PC-9 (cell line): ENCODE measurements at regions of chrX and their contacts with region 1.

Region 1: DNA sequence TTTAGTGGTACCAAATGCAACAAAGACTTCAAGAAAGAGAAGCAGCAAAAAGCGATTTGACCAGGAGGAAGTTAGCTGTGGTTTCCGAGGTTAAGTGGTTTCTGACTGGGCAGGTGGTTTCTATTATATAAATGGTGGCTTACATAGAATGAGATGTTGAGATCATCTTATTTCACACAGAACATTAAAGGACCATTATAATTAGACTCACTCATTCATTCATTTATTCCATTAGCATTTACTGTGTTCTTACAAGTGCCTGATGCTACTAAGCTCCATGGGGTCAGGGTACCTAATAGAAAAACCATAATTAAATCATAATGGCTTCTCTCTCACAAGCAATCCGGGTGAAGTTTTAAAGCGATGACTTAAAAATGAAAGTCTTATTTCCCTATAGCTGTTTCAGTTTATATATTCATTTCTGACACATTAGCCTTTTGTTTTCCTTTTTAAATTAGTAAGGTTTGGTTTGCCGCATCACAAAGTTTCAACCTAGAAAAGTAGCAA is 10.6 kb downstream of the TSPAN6 start:
- DNase-seq: no peak
- H3K4me3 ChIP-seq: no peak overlapping the region
- H3K27ac ChIP-seq: no peak overlapping the region
- H3K4me1 ChIP-seq: no peaks in the 10 kb centered on the region
- H3K27me3 ChIP-seq: no peaks in the 10 kb centered on the region
- CTCF ChIP-seq: no peak

Region 2: GRCh38 chrX:100939333-100939732 is 313.3 kb after region 1 on chrX:
- CTCF ChIA-PET with region 1: no interaction called
- POLR2A ChIA-PET with region 1: interaction called, 13 read pairs
- intact Hi-C with region 1: no loop called
- DNase-seq: no peak
- H3K4me3 ChIP-seq: no peak overlapping the region
- H3K27ac ChIP-seq: no peak overlapping the region
- H3K4me1 ChIP-seq: peaks cover 7% of the 10 kb centered on the region; the same call in 1 of the 2 replicates
- H3K27me3 ChIP-seq: no peaks in the 10 kb centered on the region
- CTCF ChIP-seq: no peak